ENCODE measurements at regions of chr2 and their contacts with region 1.

Region 1: GRCh38 chr2:190947711-190948251 is 66.2 kb downstream of the STAT1 start:
- DNase-seq: peak in 4 of 14 experiments; percentile 14 to 66 (median 64)
- ATAC-seq: peak; percentile 85
- H3K4me3 ChIP-seq: no peak overlapping the region
- H3K4me3 Mint-ChIP-seq: peak overlapping the region; percentile 59
- H3K27ac ChIP-seq: peak overlapping the region; percentile 16 to 66
- H3K27ac Mint-ChIP-seq: no peak overlapping the region
- H3K4me1 ChIP-seq: peaks cover 12% of the 10 kb centered on the region
- H3K4me1 Mint-ChIP-seq: peaks cover 27% of the 10 kb centered on the region
- H3K27me3 ChIP-seq: no peaks in the 10 kb centered on the region
- H3K27me3 Mint-ChIP-seq: no peaks in the 10 kb centered on the region
- CTCF ChIP-seq: no peak

Region 2: GRCh38 chr2:190781604-190782198 is 166.1 kb before region 1 on chr2:
- CTCF ChIA-PET with region 1: no interaction called
- POLR2A ChIA-PET with region 1: no interaction called
- intact Hi-C with region 1: loop called in 1 of 2 experiments (anchors 2 kb)
- DNase-seq: peak in 12 of 14 experiments; percentile 15 to 76 (median 29)
- ATAC-seq: peak; percentile 70
- H3K4me3 ChIP-seq: no peak overlapping the region
- H3K4me3 Mint-ChIP-seq: no peak overlapping the region
- H3K27ac ChIP-seq: no peak overlapping the region
- H3K27ac Mint-ChIP-seq: no peak overlapping the region
- H3K4me1 ChIP-seq: peaks cover 2% of the 10 kb centered on the region
- H3K4me1 Mint-ChIP-seq: no peaks in the 10 kb centered on the region
- H3K27me3 ChIP-seq: no peaks in the 10 kb centered on the region
- H3K27me3 Mint-ChIP-seq: no peaks in the 10 kb centered on the region
- CTCF ChIP-seq: peak; percentile 65

Region 3: DNA sequence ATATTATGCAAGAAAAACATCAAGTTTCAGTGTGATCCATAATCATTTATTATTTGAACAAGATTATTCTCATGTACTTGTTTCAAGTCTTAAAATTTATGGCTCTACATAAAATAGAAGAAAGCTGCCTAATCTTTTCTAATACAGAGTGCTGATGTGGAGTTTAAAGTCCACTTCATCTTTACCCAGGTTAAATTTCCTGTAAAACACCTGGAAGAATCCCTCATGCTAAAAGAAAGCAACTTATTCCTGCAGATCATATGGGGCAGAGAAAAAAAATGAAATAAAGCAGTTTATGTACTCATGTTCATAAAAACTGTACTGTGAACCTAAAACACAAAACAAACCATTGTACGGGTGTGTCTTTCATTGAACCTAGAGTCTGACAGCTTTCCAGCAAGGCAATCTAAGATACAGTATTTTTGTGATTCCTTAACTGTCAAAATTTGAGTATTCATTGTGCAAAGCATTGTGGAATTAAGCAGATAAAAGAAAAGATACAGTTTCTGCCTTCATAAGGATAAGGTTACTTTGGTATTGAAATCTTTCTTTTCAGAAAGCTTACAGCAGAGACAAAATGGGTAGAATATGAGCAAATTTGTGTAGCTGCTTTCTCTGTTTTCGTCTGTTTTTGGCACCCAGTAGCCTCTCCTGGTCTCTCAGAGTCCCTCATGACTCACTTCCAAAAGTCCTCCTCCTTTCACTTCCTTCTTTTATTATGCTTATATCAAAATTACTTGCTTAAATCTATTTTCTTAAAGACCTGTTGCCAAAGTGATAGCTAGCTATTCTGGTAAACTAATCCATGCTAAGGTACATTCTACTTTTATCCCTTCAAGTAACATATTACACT is 94.0 kb before region 1 on chr2:
- CTCF ChIA-PET with region 1: interaction called, 11 read pairs
- POLR2A ChIA-PET with region 1: interaction called, 16 read pairs
- intact Hi-C with region 1: loop called (anchors 1 to 5 kb)
- DNase-seq: peak in 2 of 14 experiments; percentile 15
- ATAC-seq: no peak
- H3K4me3 ChIP-seq: no peak overlapping the region
- H3K4me3 Mint-ChIP-seq: no peak overlapping the region
- H3K27ac ChIP-seq: no peak overlapping the region
- H3K27ac Mint-ChIP-seq: no peak overlapping the region
- H3K4me1 ChIP-seq: peaks cover 3% of the 10 kb centered on the region
- H3K4me1 Mint-ChIP-seq: no peaks in the 10 kb centered on the region
- H3K27me3 ChIP-seq: no peaks in the 10 kb centered on the region
- H3K27me3 Mint-ChIP-seq: no peaks in the 10 kb centered on the region
- CTCF ChIP-seq: no peak

Region 4: GRCh38 chr2:190916829-190917228 is 31.0 kb before region 1 on chr2:
- CTCF ChIA-PET with region 1: interaction called, 3 read pairs
- POLR2A ChIA-PET with region 1: no interaction called
- intact Hi-C with region 1: loop called in 1 of 2 experiments (anchors 2 kb)
- DNase-seq: peak in 3 of 14 experiments; percentile 3 to 25 (median 14)
- ATAC-seq: peak; percentile 68
- H3K4me3 ChIP-seq: no peak overlapping the region
- H3K4me3 Mint-ChIP-seq: no peak overlapping the region
- H3K27ac ChIP-seq: no peak overlapping the region
- H3K27ac Mint-ChIP-seq: peak overlapping the region; percentile 3
- H3K4me1 ChIP-seq: no peaks in the 10 kb centered on the region
- H3K4me1 Mint-ChIP-seq: peaks cover 57% of the 10 kb centered on the region
- H3K27me3 ChIP-seq: no peaks in the 10 kb centered on the region
- H3K27me3 Mint-ChIP-seq: no peaks in the 10 kb centered on the region
- CTCF ChIP-seq: no peak

Region 5: DNA sequence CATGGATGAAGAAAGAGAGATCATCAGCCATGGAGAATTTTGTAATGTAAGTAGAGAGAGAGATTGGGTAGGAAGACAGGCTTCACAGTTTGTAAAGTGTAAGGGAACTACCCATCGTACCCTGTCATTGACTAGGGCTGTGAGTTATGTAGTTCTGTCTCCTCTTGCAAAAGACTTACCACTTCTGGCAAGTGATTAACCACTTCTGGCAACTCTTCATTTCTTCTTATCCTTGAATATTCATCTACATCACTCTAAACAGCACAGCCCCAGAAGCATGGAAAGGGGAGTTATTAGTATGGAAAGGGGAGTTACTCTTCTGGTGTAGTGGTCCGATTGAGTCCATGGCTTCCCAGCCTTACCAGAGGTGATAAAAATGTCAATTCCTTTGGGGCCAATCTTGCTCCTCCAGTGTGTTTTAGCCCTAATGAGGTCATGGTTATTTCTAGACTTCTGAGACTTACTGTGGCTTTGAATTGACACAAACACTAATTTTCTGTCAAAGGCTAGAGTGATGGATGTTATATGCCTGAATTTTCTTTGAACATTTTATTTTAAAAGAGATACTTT is 14.2 kb after region 1 on chr2:
- CTCF ChIA-PET with region 1: interaction called, 3 read pairs
- POLR2A ChIA-PET with region 1: interaction called, 12 read pairs
- intact Hi-C with region 1: no loop called
- DNase-seq: no peak
- ATAC-seq: no peak
- H3K4me3 ChIP-seq: no peak overlapping the region
- H3K4me3 Mint-ChIP-seq: no peak overlapping the region
- H3K27ac ChIP-seq: no peak overlapping the region
- H3K27ac Mint-ChIP-seq: peak overlapping the region; percentile 76
- H3K4me1 ChIP-seq: peaks cover 5% of the 10 kb centered on the region
- H3K4me1 Mint-ChIP-seq: peaks cover 42% of the 10 kb centered on the region
- H3K27me3 ChIP-seq: no peaks in the 10 kb centered on the region
- H3K27me3 Mint-ChIP-seq: no peaks in the 10 kb centered on the region
- CTCF ChIP-seq: no peak

Region 6: GRCh38 chr2:191013932-191014652 is 66.3 kb after region 1 on chr2 and contains the start of gene STAT1:
- CTCF ChIA-PET with region 1: interaction called, 4 read pairs
- POLR2A ChIA-PET with region 1: interaction called, 11 read pairs
- intact Hi-C with region 1: no loop called
- DNase-seq: peak; percentile 89 to 99 (median 96)
- ATAC-seq: peak; percentile 84
- H3K4me3 ChIP-seq: peak within 1 kb of the TSS; percentile 75
- H3K4me3 Mint-ChIP-seq: no peak within 1 kb of the TSS
- H3K27ac ChIP-seq: peak within 1 kb of the TSS; percentile 89 to 91
- H3K27ac Mint-ChIP-seq: no peak within 1 kb of the TSS
- H3K4me1 ChIP-seq: peaks cover 54% of the 10 kb centered on the region
- H3K4me1 Mint-ChIP-seq: peaks cover 43% of the 10 kb centered on the region
- H3K27me3 ChIP-seq: no peaks in the 10 kb centered on the region
- H3K27me3 Mint-ChIP-seq: no peaks in the 10 kb centered on the region
- CTCF ChIP-seq: no peak
- total RNA-seq, gene STAT1: 56.6 to 57.8 TPM